Calu3 (cell line): ENCODE measurements at regions of chr17 and their contacts with region 1.

Region 1: DNA sequence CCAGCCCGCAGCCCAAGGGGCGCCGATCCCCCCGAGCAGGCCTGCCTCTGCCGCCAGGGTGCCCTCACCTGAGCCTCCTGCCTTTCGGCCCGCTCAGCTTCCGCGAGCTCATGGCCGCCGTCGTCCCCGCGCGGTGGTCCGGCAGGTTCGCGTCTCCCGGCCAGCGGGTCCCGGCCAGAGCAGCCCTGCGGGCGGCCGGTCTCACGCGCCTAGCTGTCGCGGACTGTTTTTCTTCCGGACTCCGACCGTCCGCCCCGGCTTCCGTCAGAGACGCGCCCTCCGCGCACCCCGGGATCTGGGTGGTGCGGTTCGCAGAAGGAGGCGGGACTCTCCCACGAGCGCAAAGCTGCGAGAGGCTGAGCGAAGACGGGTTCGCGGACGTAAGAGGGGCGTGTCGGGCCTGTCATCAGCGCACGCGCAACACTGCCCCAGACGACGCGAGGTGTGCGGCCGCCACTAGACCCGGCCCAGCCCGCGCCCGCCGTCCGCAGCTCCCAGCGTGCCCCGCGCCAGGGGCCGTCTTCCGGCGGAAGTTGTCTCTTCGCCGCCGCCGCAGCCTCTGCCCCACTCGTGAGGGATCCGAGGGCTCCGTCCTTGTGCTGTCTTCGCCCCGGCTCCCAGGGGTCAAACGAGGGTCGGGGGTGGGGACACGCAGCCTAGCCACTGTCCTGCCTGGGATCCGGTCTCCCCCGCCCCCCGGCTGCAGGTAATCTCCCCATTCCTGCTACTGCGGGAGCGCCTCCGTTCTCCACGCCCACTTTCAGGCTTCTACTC is at the start of gene INPP5K:
- DNase-seq: peak; percentile 93
- H3K4me3 Mint-ChIP-seq: peak within 1 kb of the TSS; percentile 74
- H3K27ac Mint-ChIP-seq: peak within 1 kb of the TSS; percentile 64
- H3K4me1 Mint-ChIP-seq: no peaks in the 10 kb centered on the region
- H3K27me3 Mint-ChIP-seq: no peaks in the 10 kb centered on the region
- CTCF ChIP-seq: no peak
- total RNA-seq, gene INPP5K: 15.4 and 18.7 TPM in 2 replicates

Region 2: DNA sequence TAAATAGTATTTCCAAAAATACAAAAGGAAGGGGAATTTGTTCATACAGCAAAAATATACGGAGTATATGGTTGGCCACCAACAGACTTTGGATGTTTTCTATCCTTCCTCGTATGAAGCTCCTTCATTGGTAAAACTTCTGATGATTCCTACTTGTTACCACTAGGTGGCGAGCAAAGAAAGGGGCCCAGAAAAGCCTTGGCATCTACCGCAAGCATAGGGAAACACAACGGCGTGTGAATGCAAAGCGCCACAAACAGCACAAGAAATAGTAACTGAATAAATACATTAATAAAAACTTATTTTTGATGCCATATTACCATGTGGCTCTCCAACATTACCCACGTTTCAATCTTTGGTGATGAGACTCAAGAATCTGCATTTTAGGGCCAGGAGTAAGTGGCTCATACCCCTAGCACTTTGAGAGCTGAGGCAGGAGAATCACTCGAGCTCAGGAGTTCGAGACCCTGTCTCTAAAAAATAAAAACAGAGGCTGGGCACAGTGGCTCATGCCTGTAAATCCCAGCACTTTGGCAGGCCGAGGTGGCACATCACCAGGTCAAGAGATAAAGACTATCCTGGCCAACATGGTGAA is 151.0 kb before region 1 on chr17:
- CTCF ChIA-PET with region 1: interaction called, 22 read pairs
- intact Hi-C with region 1: loop called (anchors 1 kb)
- DNase-seq: peak; percentile 46
- H3K4me3 Mint-ChIP-seq: no peak overlapping the region
- H3K27ac Mint-ChIP-seq: no peak overlapping the region
- H3K4me1 Mint-ChIP-seq: peaks cover 30% of the 10 kb centered on the region
- H3K27me3 Mint-ChIP-seq: no peaks in the 10 kb centered on the region
- CTCF ChIP-seq: peak; percentile 55